HepG2 (cell line): ENCODE measurements at regions of chr11 and their contacts with region 1.

Region 1: GRCh38 chr11:65013692-65014145 is 241 bp upstream of the ARL2 start:
- DNase-seq: no peak
- ATAC-seq: peak; percentile 88
- H3K4me3 ChIP-seq: peak overlapping the region; percentile 77 to 81 (median 80); a peak in 5 of 6 replicates
- H3K27ac ChIP-seq: peak overlapping the region; percentile 72
- H3K4me1 ChIP-seq: peaks cover 34% of the 10 kb centered on the region
- H3K27me3 ChIP-seq: no peaks in the 10 kb centered on the region
- CTCF ChIP-seq: peak; percentile 69
- EP300 ChIP-seq: 0 out of 4 replicates have a peak, but pooled peaks of 1 of the 2 experiments have one; percentile 17
- POLR2A ChIP-seq: no peak
- RAD21 ChIP-seq: peak; percentile 83

Region 2: GRCh38 chr11:64846998-64847666 is 166.6 kb before region 1 on chr11:
- CTCF ChIA-PET with region 1: interaction called, 4 read pairs
- POLR2A ChIA-PET with region 1: interaction called, 6 read pairs
- in situ Hi-C with region 1: no loop called
- intact Hi-C with region 1: loop called (anchors 1 kb)
- DNase-seq: peak; percentile 87
- ATAC-seq: peak; percentile 68
- H3K4me3 ChIP-seq: peak overlapping the region in 1 of 3 experiments; percentile 47; a peak in 2 of 6 replicates
- H3K27ac ChIP-seq: no peak overlapping the region
- H3K4me1 ChIP-seq: peaks cover 77% of the 10 kb centered on the region
- H3K27me3 ChIP-seq: no peaks in the 10 kb centered on the region; a peak in 1 of 5 replicates
- CTCF ChIP-seq: peak; percentile 99
- EP300 ChIP-seq: no peak
- POLR2A ChIP-seq: no peak
- RAD21 ChIP-seq: peak; percentile 98

Region 3: GRCh38 chr11:65040847-65041621 is 27.3 kb after region 1 on chr11 and contains the start of gene SAC3D1:
- CTCF ChIA-PET with region 1: no interaction called
- POLR2A ChIA-PET with region 1: interaction called, 13 read pairs
- in situ Hi-C with region 1: no loop called
- intact Hi-C with region 1: no loop called
- DNase-seq: peak; percentile 95
- ATAC-seq: peak; percentile 94
- H3K4me3 ChIP-seq: peak within 1 kb of the TSS; percentile 76 to 89 (median 81)
- H3K27ac ChIP-seq: peak within 1 kb of the TSS; percentile 87
- H3K4me1 ChIP-seq: peaks cover 24% of the 10 kb centered on the region
- H3K27me3 ChIP-seq: no peaks in the 10 kb centered on the region
- CTCF ChIP-seq: peak; percentile 10; the same call in 1 of the 2 replicates
- EP300 ChIP-seq: no peak
- POLR2A ChIP-seq: peak; percentile 13 to 66; a peak in 3 of 4 replicates
- RAD21 ChIP-seq: peak; percentile 44
- total RNA-seq, gene SAC3D1: 33.2 and 36.3 TPM in 2 replicates

Region 4: DNA sequence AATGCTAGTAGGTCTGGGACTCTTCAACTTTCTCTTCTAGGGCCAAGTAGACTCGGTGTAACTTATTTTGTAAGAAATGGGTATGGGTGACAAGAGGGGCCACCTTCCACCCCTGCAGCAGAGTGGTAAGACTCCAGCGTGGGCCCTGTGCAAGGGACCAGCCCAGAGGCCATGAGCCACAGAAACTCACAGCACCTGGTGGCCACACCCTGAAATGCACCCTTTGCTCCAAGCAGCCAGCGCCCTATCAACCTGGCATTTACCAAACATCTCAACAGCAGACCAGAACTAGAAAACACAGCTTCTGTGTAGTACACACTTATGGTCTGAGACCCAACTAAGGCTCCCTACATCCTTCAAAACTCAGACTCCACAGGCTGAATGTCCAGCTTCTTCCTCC is 64.4 kb after region 1 on chr11:
- CTCF ChIA-PET with region 1: interaction called, 6 read pairs
- POLR2A ChIA-PET with region 1: no interaction called
- in situ Hi-C with region 1: no loop called
- intact Hi-C with region 1: loop called (anchors 2 kb)
- DNase-seq: peak; percentile 49
- ATAC-seq: peak; percentile 94
- H3K4me3 ChIP-seq: no peak overlapping the region
- H3K27ac ChIP-seq: peak overlapping the region; percentile 27
- H3K4me1 ChIP-seq: peaks cover 33% of the 10 kb centered on the region
- H3K27me3 ChIP-seq: no peaks in the 10 kb centered on the region
- CTCF ChIP-seq: peak; percentile 86
- EP300 ChIP-seq: no peak
- POLR2A ChIP-seq: no peak
- RAD21 ChIP-seq: peak; percentile 78

Region 5: GRCh38 chr11:65117216-65118096 is 103.7 kb after region 1 on chr11 and contains the start of gene ZNHIT2:
- CTCF ChIA-PET with region 1: interaction called, 5 read pairs
- POLR2A ChIA-PET with region 1: interaction called, 10 read pairs
- in situ Hi-C with region 1: no loop called
- intact Hi-C with region 1: no loop called
- DNase-seq: peak; percentile 96
- ATAC-seq: peak; percentile 59
- H3K4me3 ChIP-seq: peak within 1 kb of the TSS; percentile 73 to 88 (median 80)
- H3K27ac ChIP-seq: peak within 1 kb of the TSS; percentile 75
- H3K4me1 ChIP-seq: peaks cover 42% of the 10 kb centered on the region
- H3K27me3 ChIP-seq: no peaks in the 10 kb centered on the region; a peak in 1 of 5 replicates
- CTCF ChIP-seq: peak; percentile 97
- EP300 ChIP-seq: 0 out of 4 replicates have a peak, but pooled peaks of 1 of the 2 experiments have one; percentile 16
- POLR2A ChIP-seq: peak in 1 of 2 experiments; percentile 87; a peak in 2 of 4 replicates
- RAD21 ChIP-seq: peak; percentile 85
- total RNA-seq, gene ZNHIT2: 5.7 and 6.5 TPM in 2 replicates

Region 6: DNA sequence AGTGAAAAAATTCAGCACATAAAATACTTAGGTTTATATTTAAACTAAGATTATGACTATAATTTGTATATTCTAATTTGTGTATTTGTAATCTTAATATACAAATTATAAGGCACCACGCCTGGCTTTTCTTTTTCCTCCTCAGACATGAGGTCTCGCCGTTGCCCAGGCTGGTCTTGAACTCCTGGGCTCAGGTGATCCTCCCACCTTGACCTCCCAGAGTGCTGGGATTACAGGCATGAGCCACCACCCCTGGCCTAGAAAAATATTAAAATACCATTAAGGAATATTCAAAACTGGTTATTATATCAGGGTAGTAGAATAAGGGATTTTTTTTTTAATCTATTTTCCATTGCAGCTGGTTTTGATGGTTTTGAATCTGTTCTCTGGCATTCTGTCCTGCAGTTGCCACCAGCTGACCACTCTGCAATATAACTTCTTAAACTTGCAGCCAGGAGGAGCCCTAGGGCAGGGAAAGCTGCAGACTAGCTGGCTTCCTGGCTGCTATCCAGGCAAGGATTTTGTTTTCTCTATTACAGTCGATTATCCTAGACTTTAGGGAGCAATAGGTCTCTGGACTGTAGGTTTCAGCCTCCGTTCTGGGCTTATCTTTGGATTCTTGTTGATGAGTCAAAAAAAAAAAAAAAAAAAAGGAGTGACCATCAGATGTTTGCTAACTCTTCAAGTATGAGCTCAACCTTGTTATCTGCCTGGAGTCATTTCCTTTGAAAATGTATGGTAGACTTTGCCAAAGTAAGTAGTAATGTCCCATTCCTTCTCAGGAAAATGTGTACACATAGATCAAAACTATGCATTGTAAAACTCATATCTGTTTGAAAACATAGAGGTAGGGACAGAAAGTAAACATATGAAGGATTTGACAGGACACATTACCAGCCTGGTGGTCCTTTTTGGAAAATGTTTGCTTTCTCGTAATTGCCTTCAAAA is 261.3 kb after region 1 on chr11:
- CTCF ChIA-PET with region 1: no interaction called
- POLR2A ChIA-PET with region 1: no interaction called
- in situ Hi-C with region 1: no loop called
- intact Hi-C with region 1: no loop called
- DNase-seq: peak; percentile 89
- ATAC-seq: peak; percentile 92
- H3K4me3 ChIP-seq: peak overlapping the region in 1 of 3 experiments; percentile 17; a peak in 2 of 6 replicates
- H3K27ac ChIP-seq: peak overlapping the region; percentile 30
- H3K4me1 ChIP-seq: peaks cover 30% of the 10 kb centered on the region
- H3K27me3 ChIP-seq: no peaks in the 10 kb centered on the region
- CTCF ChIP-seq: peak; percentile 93
- EP300 ChIP-seq: no peak
- POLR2A ChIP-seq: no peak
- RAD21 ChIP-seq: peak; percentile 95